Thyroid gland (tissue), 4 donors: ENCODE measurements at regions of chr16 and their contacts with region 1.

Region 1: GRCh38 chr16:66751303-66751991 is at the start of gene DYNC1LI2:
- DNase-seq: peak; percentile 80
- H3K4me3 ChIP-seq: peak within 1 kb of the TSS; percentile 82 to 95 (median 83)
- H3K27ac ChIP-seq: peak within 1 kb of the TSS; percentile 57 to 92 (median 84)
- H3K4me1 ChIP-seq: peaks cover 21 to 23% of the 10 kb centered on the region in 2 donors
- H3K27me3 ChIP-seq: no peaks in the 10 kb centered on the region
- CTCF ChIP-seq: peak in 5 of 6 experiments; percentile 27 to 99 (median 97)
- POLR2A ChIP-seq: peak in 1 of 2 donors; percentile 66
- total RNA-seq, gene DYNC1LI2: 162 to 332 (median 195) TPM

Region 2: GRCh38 chr16:66650707-66651473 is 100.6 kb before region 1 on chr16:
- intact Hi-C with region 1: loop called (anchors 5 kb)
- DNase-seq: peak; percentile 76 to 83
- H3K4me3 ChIP-seq: no peak overlapping the region
- H3K27ac ChIP-seq: no peak overlapping the region
- H3K4me1 ChIP-seq: peaks cover 10 to 50% of the 10 kb centered on the region in 2 donors
- H3K27me3 ChIP-seq: no peaks in the 10 kb centered on the region
- CTCF ChIP-seq: peak; percentile 85 to 97 (median 88)
- POLR2A ChIP-seq: no peak

Region 3: DNA sequence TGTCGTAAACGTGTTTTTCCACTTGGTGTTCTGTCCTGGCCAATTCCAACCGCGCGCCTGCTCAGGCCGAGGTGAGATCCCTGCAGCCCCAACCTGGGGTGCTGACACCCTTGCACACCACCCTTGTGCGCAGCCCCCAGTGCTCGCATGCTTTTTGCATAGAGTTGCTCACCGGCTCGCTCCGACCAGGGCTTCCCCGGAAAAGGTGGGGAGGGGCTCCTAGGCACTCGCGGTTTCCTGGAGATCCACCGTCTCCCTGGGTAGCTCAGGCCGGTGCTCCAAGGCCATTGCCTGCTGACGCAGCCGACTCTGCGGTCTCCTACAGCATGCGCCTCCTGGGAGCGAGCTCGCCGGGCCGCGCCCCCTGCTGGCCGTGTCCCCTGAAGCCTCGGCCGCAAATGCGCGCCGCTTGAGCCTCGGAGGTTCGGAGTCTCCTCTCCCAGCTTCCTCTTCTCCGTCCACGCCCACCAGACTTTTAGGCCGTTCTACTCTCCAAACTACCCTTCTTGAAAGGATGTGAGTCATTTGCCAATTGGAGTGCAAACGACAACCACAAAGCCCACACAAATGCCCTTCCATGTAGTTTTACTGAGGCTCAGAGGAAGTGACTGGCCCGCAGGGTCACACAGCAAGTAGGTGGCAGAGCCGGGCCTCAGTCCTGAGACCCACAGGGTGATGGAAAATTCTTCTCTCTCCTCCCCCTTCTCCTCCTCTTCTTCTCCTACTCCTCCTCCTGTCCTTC is 121.7 kb after region 1 on chr16:
- intact Hi-C with region 1: no loop called
- DNase-seq: peak; percentile 86 to 87
- H3K4me3 ChIP-seq: peak overlapping the region in 1 of 3 donors; percentile 21
- H3K27ac ChIP-seq: peak overlapping the region; percentile 81 to 88 (median 88)
- H3K4me1 ChIP-seq: peaks cover 19 to 23% of the 10 kb centered on the region in 2 donors
- H3K27me3 ChIP-seq: no peaks in the 10 kb centered on the region
- CTCF ChIP-seq: peak; percentile 72 to 88 (median 82)
- POLR2A ChIP-seq: peak in 1 of 2 donors; percentile 18

Region 4: DNA sequence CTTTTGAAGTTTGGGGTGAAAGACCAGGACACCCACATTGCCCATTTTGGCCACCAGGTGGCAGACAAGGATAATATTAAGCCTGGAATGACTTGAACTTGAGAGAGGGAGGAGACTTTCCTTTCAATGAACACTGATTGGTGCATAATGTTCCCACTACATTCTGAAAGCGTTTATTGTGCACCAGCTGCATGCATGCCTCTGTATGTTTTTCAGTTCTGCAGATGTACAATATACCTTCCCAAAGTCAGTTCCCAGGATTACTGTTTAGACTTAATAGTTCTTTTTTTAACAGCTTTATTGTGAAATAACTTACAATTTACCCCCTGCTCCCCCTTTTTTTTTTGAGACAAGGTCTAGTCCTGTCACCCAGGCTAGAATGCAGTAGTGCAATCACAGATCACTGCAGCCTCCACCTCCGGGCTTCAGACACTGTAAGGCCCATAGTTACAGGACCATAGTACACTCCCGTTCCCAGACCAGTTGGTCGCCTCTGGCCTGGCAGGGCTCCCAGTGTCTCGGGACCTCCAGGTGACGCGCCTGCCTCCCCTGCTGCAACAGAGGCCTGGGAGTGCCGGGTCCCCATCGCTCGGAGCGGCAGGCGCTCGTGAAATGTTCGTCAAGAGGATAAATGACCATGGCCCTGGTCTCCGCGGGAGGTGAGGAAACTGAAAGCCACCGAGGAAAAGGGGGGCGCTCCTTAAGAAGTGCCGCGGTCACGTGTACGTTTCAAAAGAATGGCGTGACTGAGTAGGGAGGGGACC is 196.0 kb after region 1 on chr16:
- intact Hi-C with region 1: no loop called
- DNase-seq: peak; percentile 83 to 87
- H3K4me3 ChIP-seq: peak overlapping the region in 2 of 3 donors; percentile 25 to 28
- H3K27ac ChIP-seq: no peak overlapping the region
- H3K4me1 ChIP-seq: peaks cover 10 to 11% of the 10 kb centered on the region in 2 donors
- H3K27me3 ChIP-seq: no peaks in the 10 kb centered on the region
- CTCF ChIP-seq: peak; percentile 78 to 91 (median 87)
- POLR2A ChIP-seq: peak in 1 of 2 donors; percentile 16